Sciatic nerve (tissue), 2 donors: ENCODE measurements at regions of chr1 and their contacts with region 1.

Region 1: DNA sequence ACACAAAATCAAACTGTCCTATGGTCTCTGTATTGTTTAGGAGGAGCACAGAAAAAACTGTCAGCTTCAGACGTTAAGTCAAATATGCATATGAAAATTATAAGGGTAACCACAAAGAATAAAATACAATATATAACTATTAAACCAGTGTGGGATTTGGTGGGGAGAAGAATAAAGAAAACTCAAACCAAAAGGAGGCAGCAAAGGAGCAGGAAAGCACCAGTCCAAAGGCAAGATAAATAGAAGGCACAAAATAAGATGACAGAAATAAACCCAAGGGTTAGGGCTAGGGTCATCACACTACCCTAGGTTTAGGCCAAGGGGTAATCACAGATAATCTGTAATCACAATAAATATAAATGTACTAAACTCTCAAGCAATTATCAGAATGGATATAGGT is 32.8 kb downstream of the DLGAP3 start:
- DNase-seq: no peak
- ATAC-seq: no peak

Region 2: DNA sequence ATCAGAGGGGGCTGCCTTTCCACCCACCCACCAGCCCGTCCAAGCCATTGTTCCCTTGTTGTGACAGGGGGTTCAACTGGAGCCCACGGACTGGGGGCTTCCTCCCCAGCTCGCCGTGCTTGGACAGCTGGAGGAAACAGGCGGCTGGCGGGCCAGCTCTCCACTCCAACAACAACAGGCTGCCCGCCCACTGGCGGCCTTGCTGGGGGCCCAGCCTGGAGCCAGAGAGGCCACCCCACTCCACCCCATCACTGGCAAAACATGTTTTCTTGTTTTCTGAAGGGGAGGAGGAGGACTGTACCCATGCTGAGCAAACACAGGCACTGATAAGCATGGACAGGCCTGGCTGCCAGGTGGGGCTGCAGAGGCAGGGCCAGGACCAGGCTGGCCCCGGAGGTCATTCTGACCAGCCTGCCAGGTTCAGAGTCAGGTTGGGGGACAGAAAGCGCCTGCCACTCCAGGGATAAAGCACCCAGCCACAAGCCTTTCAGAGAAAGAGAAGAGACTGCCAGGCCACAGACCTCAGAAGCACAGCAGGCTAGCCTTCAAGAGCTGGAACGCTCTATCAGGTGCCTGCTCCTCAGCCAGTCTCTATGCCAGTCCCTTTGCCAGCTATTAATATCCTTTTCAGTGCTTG is 71.0 kb before region 1 on chr1:
- intact Hi-C with region 1: loop called (anchors 2 kb)
- DNase-seq: no peak
- ATAC-seq: no peak

Region 3: DNA sequence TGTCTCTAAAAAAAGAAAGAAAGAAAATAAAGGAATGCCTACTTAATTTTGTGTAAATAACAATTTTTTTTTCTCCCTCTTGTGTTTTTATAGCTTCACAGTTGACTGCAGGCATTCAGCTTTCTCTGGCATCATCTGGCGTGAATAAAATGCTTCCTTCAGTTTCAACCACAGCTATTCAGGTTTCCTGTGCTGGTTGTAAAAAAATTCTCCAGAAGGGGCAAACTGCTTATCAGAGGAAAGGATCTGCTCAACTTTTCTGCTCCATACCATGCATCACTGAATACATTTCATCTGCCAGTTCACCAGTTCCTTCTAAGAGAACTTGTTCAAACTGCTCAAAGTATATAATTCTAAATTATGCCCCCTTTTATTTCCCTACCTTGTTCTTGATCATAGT is 200.6 kb after region 1 on chr1:
- intact Hi-C with region 1: no loop called
- DNase-seq: no peak
- ATAC-seq: no peak